ENCODE measurements at regions of chr11 and their contacts with region 1.

Region 1: DNA sequence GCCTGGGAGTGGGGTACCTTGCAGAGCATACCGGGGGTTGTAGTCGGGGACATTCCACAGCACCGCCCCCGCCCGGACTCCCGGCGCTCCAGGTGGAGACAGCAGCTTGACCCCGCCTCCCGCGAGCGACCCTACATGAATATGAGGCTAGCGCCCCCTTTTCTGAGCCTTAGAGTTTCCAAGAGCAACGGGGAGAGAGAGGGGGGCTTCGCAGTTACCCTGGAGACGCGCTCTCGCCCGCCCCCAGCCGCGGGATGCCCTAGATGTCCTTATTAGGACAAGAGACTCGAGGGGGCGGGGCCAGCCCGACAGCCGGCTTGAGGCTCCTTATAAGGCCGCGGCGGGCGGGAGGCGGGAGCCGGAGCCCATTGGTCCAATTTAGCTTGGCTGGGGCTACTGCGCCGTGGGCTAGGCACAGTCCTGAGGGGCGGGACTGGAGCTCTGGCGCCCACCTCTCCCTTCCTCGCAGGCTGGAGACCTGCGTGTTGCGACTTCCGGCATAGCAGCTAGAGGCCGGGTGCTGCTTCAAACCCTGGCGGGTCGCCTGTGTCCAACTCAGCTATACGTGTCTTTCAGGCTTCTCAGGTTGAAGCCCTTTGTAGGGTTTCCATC is 927 bp upstream of the MUS81 start:
- DNase-seq: peak; percentile 87
- H3K4me3 ChIP-seq: peak overlapping the region; percentile 93
- H3K27me3 ChIP-seq: no peaks in the 10 kb centered on the region
- CTCF ChIP-seq: peak; percentile 17; the same call in 1 of the 2 replicates

Region 2: DNA sequence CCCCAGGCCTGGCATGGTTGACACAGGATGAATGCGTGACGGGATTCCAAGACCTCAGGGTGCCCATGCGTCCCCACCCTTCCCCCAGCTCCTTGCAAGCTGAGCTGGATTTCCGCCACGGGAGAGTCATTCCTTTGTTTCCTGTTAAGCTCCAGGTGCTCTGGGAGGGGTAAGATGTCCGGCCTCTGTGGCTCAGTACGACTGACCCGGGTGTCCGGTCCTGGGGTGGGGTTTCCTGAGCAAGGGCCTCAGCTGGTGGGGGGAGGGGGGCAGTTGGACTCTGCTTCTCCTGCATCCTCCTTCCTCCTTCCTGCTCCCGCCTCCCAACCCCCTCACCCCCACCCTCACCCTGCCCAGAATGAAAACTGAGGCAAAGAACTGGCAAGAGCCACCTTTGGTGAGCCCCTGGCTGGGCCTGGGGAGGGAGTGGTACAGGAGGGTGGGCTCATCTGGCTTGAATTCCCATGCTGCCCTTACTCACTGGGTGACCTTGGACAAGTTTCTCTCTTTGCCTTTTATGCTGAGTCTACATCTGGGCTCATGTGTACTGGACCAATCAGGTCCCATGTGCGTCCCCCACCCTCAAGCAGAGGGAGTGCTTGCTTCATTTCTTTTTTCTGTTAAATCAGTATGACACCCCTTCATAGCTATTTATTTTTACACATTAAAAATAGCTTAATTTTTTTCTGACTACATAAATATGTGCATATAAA is 542.1 kb before region 1 on chr11:
- CTCF ChIA-PET with region 1: no interaction called
- POLR2A ChIA-PET with region 1: no interaction called
- DNase-seq: no peak
- H3K4me3 ChIP-seq: peak overlapping the region; percentile 94
- H3K27me3 ChIP-seq: no peaks in the 10 kb centered on the region
- CTCF ChIP-seq: no peak

Region 3: DNA sequence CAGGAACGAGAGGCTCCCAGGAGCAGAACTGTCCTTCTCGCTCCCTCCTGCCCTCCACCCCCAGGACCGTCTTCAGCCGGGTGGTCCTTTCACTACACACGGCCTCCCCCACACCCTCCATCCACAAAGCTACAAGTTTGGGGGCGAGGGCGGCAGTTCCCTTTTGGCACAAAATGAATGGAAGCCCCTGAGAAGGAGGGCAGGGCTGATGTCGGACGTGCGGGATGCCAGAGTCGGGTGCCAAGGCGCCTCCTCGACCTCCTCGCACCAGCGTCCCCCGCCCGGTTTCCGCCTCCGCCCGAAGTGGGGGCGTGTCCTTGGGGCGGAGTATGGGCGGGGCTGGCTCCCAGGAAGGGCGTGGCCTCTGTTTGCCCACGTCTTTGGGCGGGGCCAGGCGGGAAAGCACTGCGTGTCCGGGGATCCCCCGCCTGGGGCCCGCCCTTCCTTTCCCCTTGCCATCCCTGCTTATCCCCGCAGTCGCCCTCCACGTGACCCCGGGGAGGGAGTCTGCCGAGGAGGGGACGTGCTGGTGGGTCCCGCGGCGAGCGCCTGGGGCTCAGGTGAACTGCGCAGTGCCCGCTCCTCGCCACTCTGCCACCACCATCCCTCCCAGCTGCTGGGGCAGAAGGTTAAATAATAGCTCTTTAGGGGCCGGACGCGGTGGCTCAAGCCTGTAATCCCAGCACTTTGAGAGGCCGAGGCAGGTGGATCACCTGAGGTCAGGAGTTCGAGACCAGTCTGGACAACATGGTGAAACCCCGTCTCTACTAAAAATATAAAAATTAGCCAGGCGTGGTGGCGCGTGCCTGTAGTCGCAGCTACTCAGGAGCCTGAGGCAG is 14.2 kb after region 1 on chr11:
- CTCF ChIA-PET with region 1: interaction called, 70 read pairs
- POLR2A ChIA-PET with region 1: interaction called, 7 read pairs
- DNase-seq: no peak
- H3K4me3 ChIP-seq: peak overlapping the region; percentile 57
- H3K27me3 ChIP-seq: no peaks in the 10 kb centered on the region
- CTCF ChIP-seq: no peak

Region 4: DNA sequence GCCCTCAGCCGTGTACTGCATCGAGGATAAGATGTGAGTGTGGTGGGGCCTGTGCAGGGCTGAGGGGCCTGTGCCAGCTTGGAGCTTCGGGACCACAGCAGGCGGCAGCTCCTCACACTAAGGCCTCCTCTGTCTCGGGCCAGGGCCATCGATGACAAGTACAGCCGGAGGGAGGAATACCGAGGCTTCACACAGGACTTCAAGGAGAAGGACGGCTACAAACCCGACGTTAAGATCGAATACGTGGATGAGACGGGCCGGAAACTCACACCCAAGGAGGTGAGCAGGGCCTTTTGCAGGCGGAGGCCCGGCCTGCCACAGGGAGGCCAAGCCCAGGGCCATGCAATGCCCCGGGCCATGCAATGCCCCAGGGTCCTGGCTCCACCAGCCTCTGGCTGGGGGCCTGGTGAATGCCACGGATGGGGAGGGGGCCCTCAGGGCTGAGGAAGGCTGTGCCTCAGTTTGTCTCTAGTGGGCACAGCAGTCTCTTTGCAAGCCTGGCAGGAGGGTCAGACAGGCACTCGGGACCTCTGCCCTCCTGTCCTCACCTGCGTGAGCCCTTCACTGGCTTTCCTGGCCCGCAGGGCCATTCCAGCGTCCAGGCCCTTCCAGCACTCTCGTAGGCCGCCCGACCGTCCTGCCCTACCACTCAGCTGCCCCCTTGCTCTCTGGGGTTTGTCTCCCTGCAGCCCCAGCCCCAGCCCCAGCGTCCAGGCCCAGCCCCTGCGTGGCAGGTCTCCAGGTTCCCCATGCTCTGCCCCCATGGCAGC is 118.5 kb after region 1 on chr11:
- CTCF ChIA-PET with region 1: no interaction called
- POLR2A ChIA-PET with region 1: no interaction called
- DNase-seq: no peak
- H3K4me3 ChIP-seq: no peak overlapping the region
- H3K27me3 ChIP-seq: no peaks in the 10 kb centered on the region
- CTCF ChIP-seq: no peak

Measured in BJ (cell line).